MCF 10A (cell line): ENCODE measurements at regions of chr6 and their contacts with region 1.

Region 1: DNA sequence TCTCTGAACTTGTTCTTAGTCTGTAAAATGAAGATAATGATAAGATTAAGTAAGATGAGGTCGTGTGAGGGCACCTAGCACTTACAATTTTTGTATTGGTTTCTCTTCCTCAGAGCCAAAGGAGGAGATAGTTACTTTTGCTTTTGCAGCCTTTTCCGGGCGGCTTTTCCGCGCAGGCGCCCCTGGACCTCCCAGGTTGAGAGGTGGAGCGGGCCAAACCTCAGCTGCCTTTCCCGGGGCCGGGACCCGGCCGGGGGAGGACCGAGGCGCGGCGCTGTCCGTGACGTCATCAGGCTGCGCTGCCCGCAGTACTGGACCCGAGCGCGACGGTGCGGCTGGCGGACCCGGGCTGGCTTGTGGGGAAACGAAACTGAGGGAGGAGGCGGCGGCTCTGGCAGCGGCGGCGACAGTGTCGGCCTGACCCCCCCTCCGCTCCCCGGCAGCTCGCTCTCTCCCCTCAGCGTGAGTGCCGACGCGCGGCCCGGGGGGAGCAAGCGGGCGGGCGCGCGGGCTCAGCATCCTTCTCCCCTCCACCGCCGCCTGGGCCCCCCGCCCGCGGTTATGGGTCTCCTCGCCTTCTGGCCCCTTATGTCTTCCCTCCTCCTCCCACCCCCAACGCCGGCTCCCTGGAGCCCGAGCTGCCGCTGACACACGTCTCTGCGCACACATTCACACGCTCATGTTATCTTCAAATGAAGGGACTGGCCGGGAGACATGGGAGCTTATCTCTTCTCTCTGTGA is at the start of gene CMTR1:
- DNase-seq: peak; percentile 85
- H3K4me3 Mint-ChIP-seq: peak within 1 kb of the TSS; percentile 84
- H3K27ac Mint-ChIP-seq: peak within 1 kb of the TSS; percentile 94
- H3K4me1 Mint-ChIP-seq: peaks cover 19% of the 10 kb centered on the region
- H3K27me3 Mint-ChIP-seq: peaks cover 14% of the 10 kb centered on the region
- CTCF ChIP-seq: no peak
- total RNA-seq, gene CMTR1: 24.5 and 30.5 TPM in 2 replicates

Region 2: DNA sequence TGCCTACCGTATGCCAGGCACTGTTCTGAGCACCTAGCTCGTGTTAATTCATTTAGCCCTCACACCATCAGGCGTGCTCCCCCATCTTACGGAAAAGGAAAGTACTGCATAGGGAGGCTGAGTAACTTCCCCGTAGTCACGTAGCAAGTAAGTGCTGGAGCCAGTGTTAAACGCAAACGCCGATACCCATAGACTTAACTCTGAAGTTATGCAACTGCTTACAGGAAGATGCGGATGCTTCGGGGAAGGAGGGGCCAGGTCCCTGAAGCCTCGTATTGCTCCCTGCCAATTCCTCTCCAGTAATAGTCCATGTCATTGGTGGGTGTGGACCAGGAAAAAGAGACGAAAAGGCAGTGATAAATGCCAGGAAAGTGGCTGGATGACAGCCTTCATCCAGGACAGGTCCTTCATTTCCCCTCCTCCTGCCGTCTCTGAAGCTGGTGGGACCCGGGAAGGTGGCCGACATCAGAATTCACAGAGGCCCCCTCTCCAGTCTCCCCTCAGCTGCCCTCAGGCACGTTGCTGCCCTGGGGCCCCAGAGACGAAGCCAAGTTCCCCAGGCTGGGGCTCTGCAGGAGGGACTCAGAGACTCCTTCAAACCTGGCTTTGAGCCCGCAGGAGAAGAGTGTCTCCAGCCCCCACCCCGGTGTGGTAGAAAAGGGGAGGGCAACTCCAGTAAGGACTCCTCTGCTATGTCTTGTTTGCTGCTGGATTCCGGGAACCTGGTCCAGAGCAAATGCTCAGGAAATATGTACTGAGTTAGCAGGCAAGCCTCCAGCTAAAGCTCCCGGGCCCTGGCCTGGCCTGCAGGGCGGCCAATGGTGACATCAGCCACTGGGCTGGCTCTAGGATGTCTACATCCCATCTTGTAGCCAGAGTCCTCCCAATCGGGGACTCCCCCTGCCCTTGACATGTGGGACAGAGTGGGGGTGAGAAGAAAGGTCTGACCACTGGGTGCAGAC is 697.7 kb before region 1 on chr6:
- CTCF ChIA-PET with region 1: no interaction called
- POLR2A ChIA-PET with region 1: no interaction called
- intact Hi-C with region 1: no loop called
- DNase-seq: no peak
- H3K4me3 Mint-ChIP-seq: no peak overlapping the region
- H3K27ac Mint-ChIP-seq: no peak overlapping the region
- H3K4me1 Mint-ChIP-seq: no peaks in the 10 kb centered on the region
- H3K27me3 Mint-ChIP-seq: no peaks in the 10 kb centered on the region
- CTCF ChIP-seq: no peak

Region 3: DNA sequence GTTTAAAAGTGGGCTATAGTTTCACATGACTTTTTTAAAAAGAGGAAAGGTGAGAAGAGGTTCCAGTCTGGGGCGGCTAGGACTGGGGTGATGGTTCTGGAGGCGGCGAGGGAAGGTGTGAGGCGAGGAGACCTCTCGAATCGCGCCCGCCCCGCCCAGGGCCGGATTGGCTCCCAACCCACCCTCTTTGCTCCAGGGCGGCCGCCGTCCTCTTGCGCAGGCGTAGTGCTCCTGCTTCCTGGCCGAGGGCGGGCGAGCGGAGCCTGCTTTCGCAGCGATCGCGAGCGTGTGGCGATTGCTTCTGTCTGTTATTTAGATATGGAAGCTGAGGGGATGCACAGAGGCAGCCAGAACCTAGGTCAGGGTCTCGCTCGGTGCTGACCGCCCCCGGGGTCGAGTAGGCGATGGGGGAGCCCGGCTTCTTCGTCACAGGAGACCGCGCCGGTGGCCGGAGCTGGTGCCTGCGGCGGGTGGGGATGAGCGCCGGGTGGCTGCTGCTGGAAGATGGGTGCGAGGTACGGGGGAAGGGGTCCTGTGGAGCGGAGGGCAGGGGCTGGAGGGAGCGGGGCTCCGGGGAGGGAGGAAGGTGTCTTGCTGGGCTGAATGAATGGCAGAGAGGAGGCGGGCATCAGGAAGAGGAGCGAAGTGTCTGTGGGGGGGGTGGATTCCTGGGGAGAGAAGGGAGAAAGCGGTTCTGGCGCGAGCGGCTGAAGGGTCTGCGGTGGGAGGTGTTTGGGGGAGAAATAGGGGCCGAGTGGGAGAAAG is 79.1 kb before region 1 on chr6 and contains the start of gene RNF8:
- CTCF ChIA-PET with region 1: interaction called, 3 read pairs
- POLR2A ChIA-PET with region 1: interaction called, 10 read pairs
- intact Hi-C with region 1: no loop called
- DNase-seq: peak; percentile 86
- H3K4me3 Mint-ChIP-seq: peak within 1 kb of the TSS; percentile 96
- H3K27ac Mint-ChIP-seq: peak within 1 kb of the TSS; percentile 83
- H3K4me1 Mint-ChIP-seq: peaks cover 23% of the 10 kb centered on the region
- H3K27me3 Mint-ChIP-seq: no peaks in the 10 kb centered on the region
- CTCF ChIP-seq: no peak
- total RNA-seq, gene RNF8: 22.0 and 23.4 TPM in 2 replicates

Region 4: DNA sequence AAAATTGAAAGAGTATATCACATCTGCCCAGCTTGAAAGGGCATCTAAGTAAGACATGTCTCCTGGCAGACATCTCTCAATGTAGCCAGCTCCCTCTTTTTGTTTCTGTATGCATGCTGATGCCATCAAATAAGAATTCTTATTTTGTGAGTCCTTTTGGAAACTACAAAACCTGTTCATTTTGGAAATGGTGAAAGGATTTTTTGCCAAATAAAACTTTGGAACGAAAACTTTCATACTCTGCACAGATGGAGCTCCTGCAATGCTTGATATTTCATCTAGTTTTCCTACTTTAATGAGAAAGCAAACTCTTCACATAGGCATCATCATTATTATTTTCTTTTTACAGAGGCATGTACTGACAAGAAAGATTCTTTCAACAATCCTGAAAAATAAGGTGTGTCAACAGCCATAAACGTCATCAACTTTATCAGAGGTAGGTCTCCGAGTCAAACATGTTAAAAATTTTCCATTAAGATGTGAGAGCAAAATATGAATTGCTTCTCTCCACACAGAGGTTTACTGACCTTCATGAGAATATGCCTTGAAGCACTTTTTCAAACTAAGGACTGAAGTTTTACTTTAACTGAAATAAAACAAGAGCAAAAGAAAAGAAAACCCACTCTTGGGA is 26.2 kb before region 1 on chr6:
- CTCF ChIA-PET with region 1: no interaction called
- POLR2A ChIA-PET with region 1: interaction called, 32 read pairs
- intact Hi-C with region 1: no loop called
- DNase-seq: peak; percentile 15
- H3K4me3 Mint-ChIP-seq: no peak overlapping the region
- H3K27ac Mint-ChIP-seq: peak overlapping the region; percentile 85
- H3K4me1 Mint-ChIP-seq: peaks cover 9% of the 10 kb centered on the region
- H3K27me3 Mint-ChIP-seq: no peaks in the 10 kb centered on the region
- CTCF ChIP-seq: no peak

Region 5: GRCh38 chr6:37473397-37474095 is 40.5 kb after region 1 on chr6:
- CTCF ChIA-PET with region 1: no interaction called
- POLR2A ChIA-PET with region 1: interaction called, 20 read pairs
- intact Hi-C with region 1: no loop called
- DNase-seq: peak; percentile 96
- H3K4me3 Mint-ChIP-seq: no peak overlapping the region
- H3K27ac Mint-ChIP-seq: no peak overlapping the region
- H3K4me1 Mint-ChIP-seq: peaks cover 20% of the 10 kb centered on the region
- H3K27me3 Mint-ChIP-seq: no peaks in the 10 kb centered on the region
- CTCF ChIP-seq: no peak

Region 6: DNA sequence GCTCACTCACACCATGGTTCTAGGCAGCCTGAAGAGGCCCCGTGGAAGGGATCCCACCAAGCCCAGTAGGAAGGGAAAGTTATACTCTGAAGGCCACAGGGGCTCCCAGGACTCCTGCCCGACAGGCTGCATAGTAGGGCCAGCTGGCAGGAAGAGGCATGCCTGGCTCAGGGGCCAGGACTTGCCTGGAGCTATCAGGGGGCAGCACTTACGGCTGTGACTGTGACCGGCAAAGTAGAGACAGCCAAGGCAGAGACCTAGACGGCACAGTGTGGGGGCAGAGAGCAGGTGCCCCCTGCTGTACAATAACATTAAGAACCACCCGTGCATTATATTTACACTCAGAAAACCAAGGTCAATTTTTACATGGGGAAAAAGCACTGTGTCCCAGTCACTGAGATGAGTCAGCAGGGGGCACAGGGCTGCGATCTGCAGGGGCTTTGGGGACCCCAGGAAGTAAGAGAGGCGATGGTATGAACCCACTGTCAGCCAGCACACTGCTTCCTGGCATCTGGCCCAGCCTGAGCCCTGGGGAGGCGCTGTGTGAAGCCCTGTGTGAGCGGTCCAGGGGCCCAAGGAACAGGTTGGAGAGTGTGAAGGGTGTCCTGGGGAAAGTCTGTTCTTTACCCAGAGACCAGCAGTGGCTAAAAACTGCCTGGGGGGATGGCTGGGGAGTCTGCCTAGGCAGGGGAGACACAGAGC is 56.7 kb after region 1 on chr6:
- CTCF ChIA-PET with region 1: no interaction called
- POLR2A ChIA-PET with region 1: no interaction called
- intact Hi-C with region 1: no loop called
- DNase-seq: no peak
- H3K4me3 Mint-ChIP-seq: no peak overlapping the region
- H3K27ac Mint-ChIP-seq: no peak overlapping the region
- H3K4me1 Mint-ChIP-seq: peaks cover 10% of the 10 kb centered on the region
- H3K27me3 Mint-ChIP-seq: no peaks in the 10 kb centered on the region
- CTCF ChIP-seq: no peak